ENCODE measurements at regions of chr4 and their contacts with region 1.

Region 1: DNA sequence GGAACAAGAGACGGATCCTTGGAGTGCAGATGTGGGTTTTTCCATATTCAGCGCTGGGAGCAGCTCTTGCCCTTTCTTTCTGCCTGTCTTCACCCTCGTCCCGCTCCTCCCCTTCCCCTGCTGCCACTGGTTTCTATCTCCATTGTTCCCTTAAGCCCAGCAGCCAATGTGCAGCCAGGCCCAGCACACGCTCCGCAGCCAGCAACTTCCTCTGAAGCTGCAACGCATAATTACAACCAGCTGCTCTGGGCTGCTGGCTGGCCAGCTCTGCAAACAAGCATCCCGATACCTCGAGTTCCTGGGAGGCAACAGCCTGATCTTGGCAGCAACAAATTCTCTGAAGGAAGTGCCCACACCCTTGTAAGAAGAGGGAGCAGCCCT is 83.6 kb upstream of the MAML3 start:
- DNase-seq: peak; percentile 93
- ATAC-seq: peak; percentile 81
- H3K4me3 ChIP-seq: no peak overlapping the region
- H3K27ac ChIP-seq: peak overlapping the region; percentile 87
- H3K4me1 ChIP-seq: peaks cover 28% of the 10 kb centered on the region
- H3K27me3 ChIP-seq: no peaks in the 10 kb centered on the region
- CTCF ChIP-seq: no peak
- POLR2A ChIP-seq: no peak
- RAD21 ChIP-seq: 0 out of 2 replicates have a peak, but pooled peaks have one; percentile 11

Region 2: GRCh38 chr4:140163029-140163810 is 74.4 kb before region 1 on chr4:
- CTCF ChIA-PET with region 1: interaction called, 3 read pairs
- POLR2A ChIA-PET with region 1: interaction called, 3 read pairs
- dilution Hi-C with region 1: no loop called
- in situ Hi-C with region 1: loop called (anchors 10 kb)
- intact Hi-C with region 1: no loop called
- DNase-seq: peak; percentile 69
- ATAC-seq: peak; percentile 76
- H3K4me3 ChIP-seq: no peak overlapping the region; the same call in 1 of the 2 replicates
- H3K27ac ChIP-seq: peak overlapping the region; percentile 72; the same call in 1 of the 2 replicates
- H3K4me1 ChIP-seq: peaks cover 6% of the 10 kb centered on the region
- H3K27me3 ChIP-seq: no peaks in the 10 kb centered on the region
- CTCF ChIP-seq: no peak
- POLR2A ChIP-seq: no peak
- RAD21 ChIP-seq: no peak

Region 3: GRCh38 chr4:140198942-140199341 is 38.7 kb before region 1 on chr4:
- CTCF ChIA-PET with region 1: no interaction called
- POLR2A ChIA-PET with region 1: no interaction called
- dilution Hi-C with region 1: no loop called
- in situ Hi-C with region 1: no loop called
- intact Hi-C with region 1: loop called (anchors 1 kb)
- DNase-seq: no peak
- ATAC-seq: no peak
- H3K4me3 ChIP-seq: no peak overlapping the region
- H3K27ac ChIP-seq: no peak overlapping the region
- H3K4me1 ChIP-seq: no peaks in the 10 kb centered on the region
- H3K27me3 ChIP-seq: no peaks in the 10 kb centered on the region; the same call in 1 of the 2 replicates
- CTCF ChIP-seq: no peak
- POLR2A ChIP-seq: no peak
- RAD21 ChIP-seq: no peak

Region 4: GRCh38 chr4:140211693-140212092 is 25.9 kb before region 1 on chr4:
- CTCF ChIA-PET with region 1: no interaction called
- POLR2A ChIA-PET with region 1: no interaction called
- dilution Hi-C with region 1: no loop called
- in situ Hi-C with region 1: no loop called
- intact Hi-C with region 1: no loop called
- DNase-seq: no peak
- ATAC-seq: no peak
- H3K4me3 ChIP-seq: no peak overlapping the region
- H3K27ac ChIP-seq: no peak overlapping the region
- H3K4me1 ChIP-seq: no peaks in the 10 kb centered on the region
- H3K27me3 ChIP-seq: peaks cover 5% of the 10 kb centered on the region
- CTCF ChIP-seq: no peak
- POLR2A ChIP-seq: no peak
- RAD21 ChIP-seq: no peak

Region 5: GRCh38 chr4:140222171-140222570 is 15.4 kb before region 1 on chr4:
- CTCF ChIA-PET with region 1: interaction called, 6 read pairs
- POLR2A ChIA-PET with region 1: interaction called, 15 read pairs
- dilution Hi-C with region 1: no loop called
- in situ Hi-C with region 1: no loop called
- intact Hi-C with region 1: no loop called
- DNase-seq: peak; percentile 67
- ATAC-seq: peak; percentile 54; the same call in 1 of the 2 replicates
- H3K4me3 ChIP-seq: no peak overlapping the region
- H3K27ac ChIP-seq: no peak overlapping the region
- H3K4me1 ChIP-seq: no peaks in the 10 kb centered on the region; the same call in 1 of the 2 replicates
- H3K27me3 ChIP-seq: no peaks in the 10 kb centered on the region
- CTCF ChIP-seq: no peak
- POLR2A ChIP-seq: no peak
- RAD21 ChIP-seq: no peak

Region 6: DNA sequence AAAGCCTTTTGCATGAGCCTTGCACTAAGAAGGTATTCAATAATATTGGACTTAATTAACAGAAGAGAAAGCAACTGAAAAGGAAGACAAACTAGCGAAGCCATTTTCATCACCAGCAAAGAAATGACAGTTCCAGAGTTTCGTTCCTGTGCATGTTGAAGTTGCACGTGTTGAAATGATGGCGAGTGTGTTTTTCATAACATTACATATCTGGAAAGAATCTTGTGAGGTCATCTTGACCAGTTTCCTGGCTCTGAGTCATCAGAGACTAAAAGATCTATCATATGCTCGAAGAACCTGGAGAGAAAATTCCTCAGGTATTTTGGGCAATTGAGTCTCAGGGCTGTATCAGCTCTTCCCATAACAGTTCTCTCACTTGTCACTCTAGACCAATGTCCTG is 22.6 kb after region 1 on chr4:
- CTCF ChIA-PET with region 1: no interaction called
- POLR2A ChIA-PET with region 1: no interaction called
- dilution Hi-C with region 1: no loop called
- in situ Hi-C with region 1: no loop called
- intact Hi-C with region 1: no loop called
- DNase-seq: peak; percentile 94
- ATAC-seq: peak; percentile 46; the same call in 1 of the 2 replicates
- H3K4me3 ChIP-seq: no peak overlapping the region
- H3K27ac ChIP-seq: no peak overlapping the region
- H3K4me1 ChIP-seq: peaks cover 16% of the 10 kb centered on the region
- H3K27me3 ChIP-seq: no peaks in the 10 kb centered on the region
- CTCF ChIP-seq: no peak
- POLR2A ChIP-seq: no peak
- RAD21 ChIP-seq: no peak

Region 7: DNA sequence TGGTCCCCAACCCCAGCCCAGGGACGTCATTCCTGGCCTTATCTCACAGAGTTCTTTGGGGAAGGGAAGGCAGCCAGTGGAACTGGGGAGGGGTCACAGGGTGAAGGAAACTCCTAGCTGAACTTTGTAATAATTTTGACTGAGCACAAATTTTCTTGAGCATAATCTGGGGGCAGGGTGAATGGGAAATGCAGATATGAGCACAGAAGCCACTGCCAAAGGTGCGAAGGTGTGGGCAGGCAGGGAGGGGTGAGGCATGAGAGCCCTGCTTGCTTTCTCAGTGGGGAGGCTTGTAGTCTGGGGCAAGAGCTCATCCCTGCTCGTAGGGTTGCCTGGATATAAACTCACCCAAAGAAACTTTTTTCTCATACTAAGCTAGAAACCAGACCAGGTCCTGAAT is 225.6 kb after region 1 on chr4:
- CTCF ChIA-PET with region 1: no interaction called
- POLR2A ChIA-PET with region 1: no interaction called
- dilution Hi-C with region 1: no loop called
- in situ Hi-C with region 1: no loop called
- intact Hi-C with region 1: no loop called
- DNase-seq: no peak
- ATAC-seq: no peak
- H3K4me3 ChIP-seq: no peak overlapping the region
- H3K27ac ChIP-seq: no peak overlapping the region
- H3K4me1 ChIP-seq: no peaks in the 10 kb centered on the region
- H3K27me3 ChIP-seq: peaks cover 13% of the 10 kb centered on the region
- CTCF ChIP-seq: no peak
- POLR2A ChIP-seq: no peak
- RAD21 ChIP-seq: no peak